IMR-90 (cell line): ENCODE measurements at regions of chr6 and their contacts with region 1.

Region 1: GRCh38 chr6:117210279-117210678 is 55.1 kb upstream of the VGLL2 start:
- DNase-seq: no peak
- ATAC-seq: no peak
- H3K4me3 ChIP-seq: no peak overlapping the region
- H3K27ac ChIP-seq: no peak overlapping the region
- H3K4me1 ChIP-seq: no peaks in the 10 kb centered on the region
- H3K27me3 ChIP-seq: no peaks in the 10 kb centered on the region
- CTCF ChIP-seq: no peak
- POLR2A ChIP-seq: no peak
- RAD21 ChIP-seq: no peak

Region 2: GRCh38 chr6:117025310-117025709 is 185.0 kb before region 1 on chr6:
- CTCF ChIA-PET with region 1: no interaction called
- POLR2A ChIA-PET with region 1: no interaction called
- dilution Hi-C with region 1: no loop called
- in situ Hi-C with region 1: no loop called
- intact Hi-C with region 1: loop called (anchors 5 kb)
- DNase-seq: no peak
- ATAC-seq: no peak
- H3K4me3 ChIP-seq: no peak overlapping the region
- H3K27ac ChIP-seq: no peak overlapping the region
- H3K4me1 ChIP-seq: no peaks in the 10 kb centered on the region
- H3K27me3 ChIP-seq: no peaks in the 10 kb centered on the region
- CTCF ChIP-seq: no peak
- POLR2A ChIP-seq: no peak
- RAD21 ChIP-seq: no peak